Body of pancreas (tissue), 4 donors: ENCODE measurements at regions of chr2 and their contacts with region 1.

Region 1: GRCh38 chr2:63698825-63699548 is 110.2 kb downstream of the MDH1 start:
- DNase-seq: peak; percentile 22 to 59 (median 33)
- ATAC-seq: peak; percentile 81
- H3K4me3 ChIP-seq: no peak overlapping the region
- H3K27ac ChIP-seq: no peak overlapping the region
- H3K4me1 ChIP-seq: peaks cover 4% of the 10 kb centered on the region
- H3K27me3 ChIP-seq: no peaks in the 10 kb centered on the region
- CTCF ChIP-seq: peak; percentile 35 to 71 (median 59)
- POLR2A ChIP-seq: no peak

Region 2: DNA sequence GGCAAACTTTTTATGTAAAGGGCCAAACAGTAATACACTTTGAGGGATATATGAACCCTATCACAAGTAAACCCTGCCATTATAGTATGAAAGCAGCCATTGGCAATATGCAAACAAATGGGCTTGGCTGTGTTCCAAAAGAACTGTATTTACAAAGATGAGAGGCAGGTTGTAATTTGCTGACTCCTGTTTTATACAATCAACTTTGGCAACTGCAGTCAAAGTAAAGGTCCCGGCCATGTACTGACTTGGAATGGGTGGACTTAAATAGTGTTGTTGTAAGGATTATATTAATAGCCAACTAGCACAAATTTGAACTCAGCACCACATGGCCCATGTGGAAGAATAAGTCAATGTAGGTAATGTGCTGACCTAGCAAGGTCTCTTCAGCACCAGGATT is 334.1 kb before region 1 on chr2:
- intact Hi-C with region 1: no loop called
- DNase-seq: no peak
- ATAC-seq: no peak
- H3K4me3 ChIP-seq: no peak overlapping the region
- H3K27ac ChIP-seq: no peak overlapping the region
- H3K4me1 ChIP-seq: no peaks in the 10 kb centered on the region
- H3K27me3 ChIP-seq: no peaks in the 10 kb centered on the region
- CTCF ChIP-seq: no peak
- POLR2A ChIP-seq: no peak

Region 3: DNA sequence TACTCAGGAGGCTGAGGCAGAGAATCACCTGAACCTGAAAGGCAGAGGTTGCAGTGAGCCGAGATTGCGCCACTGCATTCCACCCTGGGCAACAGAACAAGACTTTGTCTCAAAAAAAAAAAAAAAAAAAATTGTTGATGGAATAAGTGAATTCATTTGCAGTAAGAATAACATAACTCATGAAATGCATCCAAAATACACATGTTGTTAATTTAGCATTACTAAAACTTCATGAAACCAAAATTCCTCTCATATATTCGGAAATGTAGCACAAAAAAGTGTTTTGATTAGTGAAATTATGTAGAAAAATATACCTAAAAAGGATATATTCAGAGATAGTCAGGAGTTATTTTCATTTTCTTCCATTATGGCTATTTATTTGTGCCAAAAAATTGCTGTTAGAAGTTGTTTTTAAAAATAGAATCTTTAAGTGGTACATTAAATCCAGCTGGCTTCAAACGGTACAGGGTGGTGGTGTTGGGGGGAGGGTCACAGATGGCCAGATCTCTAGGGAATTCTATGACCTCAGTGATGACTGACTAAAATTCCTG is 64.5 kb after region 1 on chr2:
- intact Hi-C with region 1: no loop called
- DNase-seq: peak in 3 of 4 donors; percentile 5 to 19 (median 9)
- ATAC-seq: no peak
- H3K4me3 ChIP-seq: no peak overlapping the region
- H3K27ac ChIP-seq: no peak overlapping the region
- H3K4me1 ChIP-seq: no peaks in the 10 kb centered on the region
- H3K27me3 ChIP-seq: no peaks in the 10 kb centered on the region
- CTCF ChIP-seq: no peak
- POLR2A ChIP-seq: no peak

Region 4: DNA sequence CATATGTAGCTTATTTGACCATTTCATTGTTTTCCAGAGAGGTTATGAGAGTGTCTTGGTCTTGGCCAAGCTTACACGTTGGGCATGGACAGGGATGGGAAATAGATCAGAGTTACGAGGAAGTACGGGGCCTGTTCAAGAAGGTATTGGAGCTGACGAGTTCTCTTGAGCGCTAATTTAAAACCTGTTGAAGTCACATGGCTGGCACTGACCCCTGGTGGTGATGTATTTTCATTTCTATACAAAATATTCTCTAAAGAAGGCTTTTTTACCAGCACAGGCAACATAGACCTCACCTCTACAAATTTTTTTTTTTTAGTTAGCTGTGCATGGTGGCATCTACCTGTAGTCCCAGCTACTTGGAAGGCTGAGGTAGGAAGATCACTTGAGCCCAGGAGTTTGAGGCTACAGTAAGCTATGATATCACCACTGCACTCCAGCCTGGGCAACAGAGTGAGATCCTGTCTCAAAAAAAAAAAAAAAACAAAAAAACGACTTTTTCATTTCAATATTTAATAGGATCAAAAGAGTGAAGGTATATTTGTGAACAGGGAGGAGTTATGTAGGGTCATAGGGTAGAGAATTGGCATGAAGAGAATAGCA is 162.3 kb after region 1 on chr2:
- intact Hi-C with region 1: loop called (anchors 10 kb)
- DNase-seq: peak; percentile 58 to 72 (median 68)
- ATAC-seq: peak; percentile 69
- H3K4me3 ChIP-seq: no peak overlapping the region
- H3K27ac ChIP-seq: no peak overlapping the region
- H3K4me1 ChIP-seq: peaks cover 22% of the 10 kb centered on the region
- H3K27me3 ChIP-seq: no peaks in the 10 kb centered on the region
- CTCF ChIP-seq: peak; percentile 8 to 75 (median 65)
- POLR2A ChIP-seq: no peak